ENCODE measurements at regions of chr11 and their contacts with region 1.

Region 1: GRCh38 chr11:104657083-104657482 is 241.2 kb downstream of the CASP12 start:
- DNase-seq: no peak
- H3K4me3 Mint-ChIP-seq: no peak overlapping the region
- H3K27ac Mint-ChIP-seq: no peak overlapping the region
- H3K4me1 Mint-ChIP-seq: peaks cover 34% of the 10 kb centered on the region
- H3K27me3 Mint-ChIP-seq: peaks cover 8% of the 10 kb centered on the region

Region 2: DNA sequence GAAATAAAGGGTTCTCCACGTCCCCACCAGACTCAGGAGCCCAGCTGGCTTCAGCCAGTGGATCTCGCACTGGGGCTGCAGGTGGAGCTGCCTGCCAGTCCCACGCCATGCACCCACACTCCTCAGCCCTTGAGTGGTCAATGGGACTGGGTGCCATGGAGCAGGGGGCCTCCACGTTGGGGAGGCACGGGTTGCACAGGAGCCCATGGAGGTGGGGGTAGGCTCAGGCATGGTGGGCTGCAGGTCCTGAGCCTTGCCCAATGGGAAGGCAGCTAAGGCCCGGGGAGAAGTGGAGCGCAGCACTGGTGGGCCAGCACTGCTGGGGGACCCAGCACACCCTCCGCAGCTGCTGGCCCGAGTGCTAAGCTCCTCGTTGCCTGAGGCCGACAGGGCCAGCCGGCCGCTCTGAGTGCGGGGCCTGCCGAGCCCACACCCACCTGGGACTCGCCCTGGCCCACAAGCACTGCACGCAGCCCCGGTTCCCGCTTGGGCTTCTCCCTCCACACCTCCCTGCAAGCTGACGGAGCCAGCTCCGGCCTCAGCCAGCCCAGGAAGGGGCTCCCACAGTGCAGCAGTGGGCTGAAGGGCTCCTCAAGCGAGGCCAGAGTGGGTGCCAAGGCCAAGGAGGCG is 234.7 kb before region 1 on chr11:
- intact Hi-C with region 1: no loop called
- DNase-seq: no peak
- H3K4me3 Mint-ChIP-seq: no peak overlapping the region
- H3K27ac Mint-ChIP-seq: no peak overlapping the region
- H3K4me1 Mint-ChIP-seq: no peaks in the 10 kb centered on the region
- H3K27me3 Mint-ChIP-seq: no peaks in the 10 kb centered on the region

Region 3: DNA sequence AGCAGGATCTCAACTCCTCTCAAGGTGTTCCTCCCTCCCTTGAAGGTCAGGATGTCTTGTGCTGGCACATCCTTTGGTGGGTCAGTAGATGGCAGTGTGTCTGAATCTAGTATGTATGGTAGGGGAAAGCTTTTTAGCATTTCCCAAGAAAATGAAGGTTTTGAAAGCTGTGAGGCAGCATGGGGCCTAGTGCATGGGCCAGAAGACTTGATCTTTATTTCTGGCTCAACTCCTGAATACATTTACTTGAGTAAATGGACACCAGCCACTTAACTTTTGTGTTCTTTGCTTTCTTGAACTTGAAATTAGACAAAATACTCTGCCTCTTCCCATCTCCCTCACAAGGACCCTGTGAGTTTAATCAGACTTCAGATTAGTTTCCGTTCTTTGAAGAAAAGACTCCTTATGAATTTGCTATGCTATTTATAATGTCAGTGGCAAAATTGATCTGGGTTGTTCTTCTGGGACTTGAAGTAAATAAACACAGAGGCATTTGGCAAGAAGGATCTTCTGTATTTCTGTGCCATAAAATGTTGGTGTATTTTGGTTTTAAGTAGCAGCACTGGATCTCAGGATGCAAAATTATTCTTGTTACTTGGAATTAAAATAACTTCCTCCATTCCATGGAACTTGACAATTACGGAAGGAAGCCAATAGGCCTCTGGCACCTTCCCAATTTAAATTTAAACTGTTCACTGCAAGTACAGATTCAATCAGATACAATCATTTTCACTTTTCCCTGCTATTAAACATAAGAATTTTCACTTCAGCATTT is 47.6 kb before region 1 on chr11:
- intact Hi-C with region 1: loop called (anchors 2 kb)
- DNase-seq: peak; percentile 82
- H3K4me3 Mint-ChIP-seq: no peak overlapping the region
- H3K27ac Mint-ChIP-seq: no peak overlapping the region
- H3K4me1 Mint-ChIP-seq: peaks cover 14% of the 10 kb centered on the region
- H3K27me3 Mint-ChIP-seq: peaks cover 8% of the 10 kb centered on the region

Region 4: DNA sequence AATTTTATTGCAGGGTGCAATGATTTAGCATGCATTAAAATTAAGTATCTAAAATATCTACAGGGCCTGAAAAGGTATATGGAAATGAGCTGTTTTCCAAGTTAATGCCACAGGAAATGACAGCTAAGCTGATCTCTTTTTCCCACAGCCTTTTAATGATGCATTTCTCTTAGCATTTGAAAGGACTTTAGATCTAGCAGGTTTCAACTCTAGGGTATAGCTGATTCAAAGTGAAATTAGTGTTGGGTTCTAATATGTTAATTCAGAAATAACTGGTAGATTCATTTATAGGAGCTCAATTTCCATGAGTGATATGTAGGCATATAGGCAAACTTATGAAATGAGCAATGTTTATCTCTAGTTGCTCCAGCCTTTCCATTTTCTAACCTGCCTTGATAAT is 33.1 kb before region 1 on chr11:
- intact Hi-C with region 1: loop called (anchors 1 kb)
- DNase-seq: no peak
- H3K4me3 Mint-ChIP-seq: no peak overlapping the region
- H3K27ac Mint-ChIP-seq: no peak overlapping the region
- H3K4me1 Mint-ChIP-seq: peaks cover 7% of the 10 kb centered on the region
- H3K27me3 Mint-ChIP-seq: no peaks in the 10 kb centered on the region

Region 5: DNA sequence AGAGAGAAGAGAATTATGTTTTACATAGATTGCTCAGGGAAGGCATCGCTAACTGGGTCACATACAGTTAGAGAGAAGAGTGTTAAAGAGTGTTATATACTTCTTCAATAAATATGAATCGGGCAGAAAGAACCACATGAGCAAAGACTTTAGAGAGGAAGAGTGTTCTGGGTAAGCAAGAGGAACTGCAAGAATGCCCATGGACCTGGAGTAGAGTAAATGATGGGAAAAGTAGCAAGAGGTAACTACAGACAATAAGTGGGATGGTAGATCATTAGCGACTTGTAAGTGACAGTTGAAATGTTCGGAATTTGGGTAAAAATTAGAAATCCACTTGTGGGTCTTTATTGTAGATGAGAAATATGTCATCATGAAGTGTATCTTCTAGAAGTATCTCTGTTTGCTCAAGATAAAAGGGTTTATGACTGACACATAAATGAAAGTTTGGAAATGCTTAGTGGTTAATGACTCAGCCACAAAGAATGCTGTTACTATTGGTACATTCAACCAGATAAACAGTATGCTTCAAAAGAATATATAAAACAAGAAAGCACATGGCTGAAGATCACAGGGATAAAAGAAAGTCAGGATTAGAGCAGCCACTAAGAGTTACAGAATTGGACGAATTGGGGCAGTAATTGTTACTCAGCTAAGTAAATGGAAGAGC is 11.8 kb after region 1 on chr11:
- intact Hi-C with region 1: loop called (anchors 1 kb)
- DNase-seq: no peak
- H3K4me3 Mint-ChIP-seq: no peak overlapping the region
- H3K27ac Mint-ChIP-seq: peak overlapping the region; percentile 42
- H3K4me1 Mint-ChIP-seq: peaks cover 14% of the 10 kb centered on the region
- H3K27me3 Mint-ChIP-seq: peaks cover 14% of the 10 kb centered on the region

Measured in activated CD4-positive, alpha-beta T cell treated with anti-CD3 and anti-CD28 coated beads, Interleukin-2, amount 10 ng/mL, durations not matched to agents 24 days and 14 days (primary cell).